AG04449 (cell line): ENCODE measurements at regions of chr1 and their contacts with region 1.

Region 1: GRCh38 chr1:204213668-204214662 is at the start of gene GOLT1A:
- DNase-seq: peak; percentile 59
- H3K4me3 ChIP-seq: peak within 1 kb of the TSS; percentile 8
- CTCF ChIP-seq: peak; percentile 75

Region 2: DNA sequence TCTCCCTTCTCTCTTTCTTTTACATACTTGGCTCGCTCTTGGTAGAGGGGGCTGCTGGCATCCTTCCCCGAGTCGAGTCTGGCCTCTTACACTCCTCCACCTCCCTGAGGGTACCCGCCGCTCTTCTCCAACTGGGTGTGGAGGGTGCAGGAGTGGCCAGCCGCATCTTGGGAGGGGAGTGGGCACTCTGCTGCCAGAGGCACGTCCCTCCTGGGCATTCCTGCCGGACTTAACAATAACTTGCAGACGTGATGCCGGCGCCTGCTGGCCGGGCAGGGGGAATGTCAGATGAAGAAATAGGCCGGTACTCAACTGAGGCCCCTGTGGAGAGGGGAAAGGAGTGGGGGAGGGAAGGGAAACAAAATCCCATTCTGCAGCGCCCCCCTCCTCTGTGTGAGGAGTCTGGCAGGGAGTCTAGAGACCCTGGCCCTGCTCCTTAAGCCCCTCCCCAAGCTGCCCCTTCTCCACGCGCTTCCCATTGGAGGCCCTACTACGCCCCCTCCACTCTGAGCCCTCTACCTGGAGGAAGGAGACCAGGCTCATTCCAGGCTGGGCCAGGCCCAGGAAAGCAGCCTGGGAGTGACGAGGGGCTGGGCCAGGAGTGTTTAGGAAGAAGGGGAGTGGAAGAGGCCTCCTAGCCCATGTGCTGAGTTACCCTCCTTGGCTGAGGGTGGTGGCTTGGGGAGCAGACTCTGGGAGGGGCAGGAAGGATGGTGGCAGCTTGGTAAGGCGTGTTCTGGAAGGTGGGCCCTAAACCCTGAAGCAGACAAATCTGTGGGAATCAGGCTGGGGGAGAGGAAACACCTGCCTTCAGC is 585.6 kb before region 1 on chr1:
- CTCF ChIA-PET with region 1: no interaction called
- POLR2A ChIA-PET with region 1: no interaction called
- DNase-seq: no peak
- H3K4me3 ChIP-seq: peak overlapping the region; percentile 85
- CTCF ChIP-seq: peak; percentile 39

Region 3: DNA sequence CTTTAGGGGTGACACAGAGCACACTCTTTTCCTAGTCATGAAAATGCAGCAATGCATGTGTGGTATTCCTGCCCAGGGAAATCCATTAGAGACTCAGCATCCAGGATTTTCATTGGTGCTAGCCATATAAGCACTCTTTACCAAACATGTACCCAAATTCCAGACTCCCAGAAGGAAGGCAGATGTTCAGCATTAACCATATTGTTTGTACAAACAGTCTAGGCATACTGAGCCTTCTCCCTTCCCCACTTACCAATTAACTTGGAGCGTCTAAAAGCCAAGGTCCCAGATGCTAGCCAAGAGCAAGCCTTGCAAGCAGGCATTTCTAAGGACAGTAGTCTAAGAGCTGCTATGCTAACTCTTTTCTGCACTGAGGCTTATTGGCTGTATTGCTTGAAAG is 390.7 kb before region 1 on chr1:
- CTCF ChIA-PET with region 1: no interaction called
- POLR2A ChIA-PET with region 1: no interaction called
- DNase-seq: peak; percentile 14
- H3K4me3 ChIP-seq: no peak overlapping the region
- CTCF ChIP-seq: no peak

Region 4: DNA sequence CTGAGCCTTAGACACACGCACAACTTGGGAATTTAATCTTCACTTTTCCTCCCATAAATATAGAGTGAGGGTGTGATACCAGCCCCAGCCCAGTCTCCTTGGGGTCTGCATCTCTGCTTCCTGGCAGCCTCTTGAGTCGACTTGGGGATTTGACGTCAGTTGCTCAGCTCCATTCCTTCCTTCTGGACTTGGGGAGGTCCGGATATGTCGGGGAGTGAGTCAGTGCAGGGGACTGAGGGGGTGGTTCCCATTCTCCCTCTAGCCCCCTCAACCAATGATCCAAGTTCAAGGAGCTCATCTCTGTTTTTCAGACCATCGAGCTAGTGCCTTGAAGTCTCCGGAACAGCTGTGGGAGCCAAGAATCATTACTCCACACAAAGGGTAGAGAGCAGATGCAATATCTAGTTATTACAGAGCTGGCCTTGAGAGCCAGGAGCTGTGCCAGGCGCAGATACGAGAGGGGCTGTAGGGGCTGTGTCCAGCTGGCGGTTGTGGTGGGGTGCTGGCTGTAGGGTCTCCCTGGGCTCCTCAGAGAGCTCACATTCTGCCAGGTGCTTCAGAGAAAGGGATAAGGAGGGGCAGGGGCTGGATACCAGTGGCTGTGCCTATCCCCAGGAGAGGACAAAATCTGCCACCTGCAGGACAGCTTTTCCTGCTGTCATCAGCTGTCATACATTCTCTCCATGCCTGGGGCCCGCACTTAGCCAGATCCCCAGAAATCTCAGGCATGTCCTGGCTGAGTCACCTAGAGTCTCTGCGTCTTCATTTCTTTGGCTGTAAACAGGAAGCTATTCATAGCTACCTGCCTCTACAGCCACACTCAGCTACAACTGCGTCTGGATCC is 15.6 kb before region 1 on chr1:
- CTCF ChIA-PET with region 1: interaction called, 28 read pairs
- POLR2A ChIA-PET with region 1: no interaction called
- DNase-seq: peak; percentile 53
- H3K4me3 ChIP-seq: no peak overlapping the region
- CTCF ChIP-seq: peak; percentile 17

Region 5: DNA sequence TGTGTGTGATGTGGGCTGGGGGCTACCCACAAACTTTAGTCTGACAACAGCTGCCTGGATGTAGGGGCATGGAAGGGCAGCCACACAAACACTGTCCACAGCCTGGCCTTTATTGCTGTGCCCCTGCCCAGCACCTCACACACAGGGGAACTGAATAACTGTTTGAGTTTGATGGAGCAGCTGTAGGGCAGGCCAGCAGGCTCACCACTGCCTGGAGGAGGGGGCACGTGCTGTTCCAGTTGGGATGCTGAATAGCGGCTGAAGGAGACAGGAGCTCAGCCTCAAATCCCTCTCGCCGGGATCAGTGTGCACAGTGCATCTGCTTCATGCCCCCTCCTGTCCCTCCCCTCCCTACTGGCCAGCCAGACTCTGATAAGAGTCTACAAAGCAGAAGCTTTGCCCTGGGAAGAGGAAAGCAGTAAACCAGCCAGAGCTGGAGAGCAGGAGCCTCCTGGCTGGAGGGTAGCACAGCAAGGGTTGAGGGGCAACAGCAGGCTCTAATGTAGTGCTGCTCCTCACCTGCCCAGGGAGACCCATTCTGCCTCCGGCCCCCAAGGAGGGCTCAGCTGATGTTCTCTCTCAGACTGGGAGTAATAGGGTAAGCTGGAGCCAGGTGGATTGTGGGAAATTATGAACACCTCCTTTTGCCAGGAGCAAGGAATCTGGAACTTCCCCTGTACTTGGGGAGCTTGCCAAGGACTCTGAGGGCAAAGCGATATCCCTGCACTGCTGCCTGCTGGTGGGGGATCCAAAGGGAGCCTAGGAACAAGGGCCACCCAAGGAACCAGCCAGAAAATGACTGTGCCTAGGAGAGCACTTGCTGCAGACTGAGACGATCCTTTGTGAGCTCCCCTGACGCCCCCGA is 70.0 kb after region 1 on chr1:
- CTCF ChIA-PET with region 1: interaction called, 11 read pairs
- POLR2A ChIA-PET with region 1: no interaction called
- DNase-seq: no peak
- H3K4me3 ChIP-seq: no peak overlapping the region
- CTCF ChIP-seq: no peak

Region 6: DNA sequence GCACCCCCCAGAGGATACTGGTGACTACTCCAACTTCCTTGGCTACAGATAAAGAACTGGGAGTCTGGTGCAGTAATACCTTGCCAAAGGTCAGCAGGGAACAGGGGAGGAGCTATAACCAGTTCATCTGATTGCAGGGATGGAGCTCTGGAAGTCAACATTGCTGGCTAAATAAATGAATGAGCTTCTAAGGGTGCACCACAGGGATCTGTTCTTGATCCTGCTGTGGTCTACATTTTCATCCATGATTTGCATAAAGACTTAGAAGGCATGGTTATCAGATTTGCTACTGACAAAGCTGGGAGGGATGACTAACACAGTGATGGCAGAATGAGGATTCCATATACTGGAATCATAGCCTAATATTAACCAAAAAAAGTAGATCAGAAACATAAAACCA is 127.4 kb after region 1 on chr1:
- CTCF ChIA-PET with region 1: interaction called, 13 read pairs
- POLR2A ChIA-PET with region 1: no interaction called
- DNase-seq: peak; percentile 33
- H3K4me3 ChIP-seq: no peak overlapping the region
- CTCF ChIP-seq: no peak

Region 7: GRCh38 chr1:204377795-204378608 is 164.0 kb after region 1 on chr1:
- CTCF ChIA-PET with region 1: interaction called, 16 read pairs
- POLR2A ChIA-PET with region 1: no interaction called
- DNase-seq: no peak
- H3K4me3 ChIP-seq: peak overlapping the region; percentile 50
- CTCF ChIP-seq: no peak